ENCODE measurements at regions of chr6 and their contacts with region 1.

Region 1: DNA sequence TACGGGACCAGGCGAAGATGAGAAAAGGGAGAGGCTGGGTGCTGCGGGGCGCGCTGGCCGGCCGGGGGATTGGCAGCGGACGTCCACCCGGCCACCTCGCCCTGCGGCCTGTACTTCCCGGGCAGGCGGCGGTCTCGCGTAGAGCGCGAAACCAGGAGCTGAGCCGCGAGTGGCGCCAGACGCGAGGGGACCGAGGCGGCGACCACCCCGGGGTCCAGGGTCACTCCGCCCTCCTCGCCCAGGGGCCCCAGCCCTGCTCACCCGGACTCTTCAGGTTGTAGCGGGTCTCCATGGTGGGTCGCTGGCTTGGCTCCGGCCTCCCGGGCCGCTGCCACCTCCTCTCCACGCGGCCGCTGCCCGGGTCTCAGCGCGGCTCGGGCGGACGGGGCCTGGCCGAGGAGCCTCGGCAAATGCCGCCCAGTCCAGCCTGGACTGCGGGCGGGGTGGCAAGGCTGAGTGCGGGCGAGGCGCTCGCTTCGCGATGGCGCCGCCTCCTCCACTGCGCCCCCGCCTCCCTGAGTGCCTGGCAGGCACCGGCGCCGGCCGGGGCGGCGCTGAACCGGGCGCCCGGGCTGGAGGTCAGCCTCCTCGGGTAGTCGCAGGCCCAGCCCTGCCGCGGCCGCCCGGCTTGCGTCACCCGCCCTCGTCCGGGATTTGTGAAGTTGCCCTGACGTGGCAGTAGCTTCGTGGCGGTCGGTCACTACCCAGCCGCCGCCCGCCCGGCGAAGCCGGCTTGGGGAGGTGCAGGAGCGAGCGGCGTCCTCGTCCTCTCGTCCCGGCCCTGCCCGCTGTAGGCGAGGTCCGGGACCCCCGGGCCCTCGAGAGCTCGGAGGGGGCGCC is at the start of gene UBE2J1:
- DNase-seq: peak; percentile 80 to 93
- H3K4me3 ChIP-seq: peak within 1 kb of the TSS; percentile 81
- H3K27ac ChIP-seq: peak within 1 kb of the TSS; percentile 88
- H3K4me1 ChIP-seq: peaks cover 28% of the 10 kb centered on the region
- H3K27me3 ChIP-seq: no peaks in the 10 kb centered on the region
- CTCF ChIP-seq: no peak
- total RNA-seq, gene UBE2J1: 19.8 and 29.0 TPM in 2 replicates

Region 2: DNA sequence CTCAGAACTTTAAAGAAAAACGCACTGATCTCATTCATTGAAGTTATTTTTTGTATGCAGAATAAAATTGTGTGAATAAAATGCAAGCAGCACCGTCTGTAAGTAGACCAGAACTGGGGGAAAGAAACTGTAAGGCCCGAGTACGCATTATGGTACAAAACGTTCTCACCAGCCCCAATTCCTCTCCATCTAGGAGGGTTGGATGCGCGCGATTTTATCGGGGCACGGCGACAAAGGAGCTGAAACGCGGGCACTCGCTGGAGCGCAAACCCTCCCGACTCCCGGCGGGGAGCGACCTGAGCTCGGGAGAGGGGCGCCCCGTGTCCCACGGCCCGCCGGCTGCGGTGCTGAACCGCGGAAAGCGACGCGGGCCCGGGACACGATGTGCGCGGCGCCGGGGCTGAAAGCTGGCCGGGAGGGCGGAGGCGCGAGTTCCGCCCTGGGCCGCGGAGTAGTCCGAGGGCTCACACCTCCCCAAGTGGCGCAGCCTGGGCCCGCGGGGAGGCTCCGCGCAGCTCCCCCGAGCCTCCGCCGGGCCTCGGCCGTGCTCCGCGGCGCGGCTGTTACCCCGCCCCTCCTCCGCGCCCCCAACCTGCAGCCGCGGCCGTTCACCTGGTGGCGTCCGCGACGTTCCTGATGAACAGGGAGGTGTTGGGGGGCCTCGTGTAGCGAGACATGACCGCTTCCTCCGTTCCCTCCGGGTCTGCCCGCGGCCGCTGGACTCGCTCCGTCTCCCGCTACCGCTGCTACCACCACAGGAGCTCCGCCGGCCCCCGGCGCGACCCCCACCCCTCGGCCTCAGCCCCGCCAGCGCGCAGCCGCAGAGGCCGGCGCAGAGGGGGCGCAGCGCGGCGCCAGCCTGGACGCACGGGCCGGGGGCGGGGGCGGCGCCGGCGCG is 235.0 kb before region 1 on chr6 and contains the start of gene SRSF12:
- CTCF ChIA-PET with region 1: no interaction called
- POLR2A ChIA-PET with region 1: interaction called, 10 read pairs
- intact Hi-C with region 1: no loop called
- DNase-seq: peak in 1 of 2 experiments; percentile 11
- H3K4me3 ChIP-seq: peak within 1 kb of the TSS; percentile 56; the same call in 1 of the 2 replicates
- H3K27ac ChIP-seq: no peak within 1 kb of the TSS
- H3K4me1 ChIP-seq: no peaks in the 10 kb centered on the region
- H3K27me3 ChIP-seq: 0 out of 2 replicates have a peak, but pooled peaks cover 4% of the 10 kb centered on the region
- CTCF ChIP-seq: no peak
- total RNA-seq, gene SRSF12: not detected in 2 replicates

Region 3: DNA sequence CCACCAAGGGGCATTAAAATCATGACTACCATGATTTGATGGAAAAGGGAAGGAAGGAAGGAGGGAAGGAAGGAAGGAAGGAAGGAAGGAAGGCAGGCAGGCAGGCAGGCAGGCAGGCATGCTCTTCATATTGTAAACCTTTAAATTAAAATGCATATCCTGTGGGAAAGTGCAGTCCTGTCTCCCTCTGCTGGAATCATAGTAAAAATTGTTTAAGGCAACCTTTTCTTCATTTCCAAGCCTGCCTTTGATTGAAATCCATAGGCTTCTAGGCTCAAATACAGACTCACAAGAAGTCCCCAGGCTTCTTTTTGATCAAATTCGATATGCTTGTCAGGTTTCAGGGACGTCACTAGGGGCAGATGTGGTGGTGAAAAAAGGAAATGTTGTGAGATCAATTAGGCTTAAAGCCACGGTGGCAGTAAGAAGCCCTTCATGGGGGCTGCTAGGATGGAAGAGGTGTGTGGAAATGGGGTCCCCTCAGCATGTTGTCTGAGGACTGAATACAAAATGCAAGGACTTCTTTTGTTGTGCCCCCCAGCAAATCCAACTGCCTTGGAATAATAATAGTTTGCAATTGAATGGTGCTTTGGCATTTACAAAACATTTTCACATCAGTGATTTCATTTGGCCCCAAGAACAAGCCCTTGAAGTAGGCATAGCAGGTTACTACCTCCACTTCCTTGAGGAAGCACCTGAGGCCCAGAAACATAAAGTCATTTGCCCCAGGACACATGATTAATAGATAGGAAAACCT is 109.7 kb before region 1 on chr6:
- CTCF ChIA-PET with region 1: no interaction called
- POLR2A ChIA-PET with region 1: interaction called, 30 read pairs
- intact Hi-C with region 1: no loop called
- DNase-seq: peak in 1 of 2 experiments; percentile 43
- H3K4me3 ChIP-seq: no peak overlapping the region
- H3K27ac ChIP-seq: peak overlapping the region; percentile 33
- H3K4me1 ChIP-seq: peaks cover 12% of the 10 kb centered on the region; the same call in 1 of the 2 replicates
- H3K27me3 ChIP-seq: no peaks in the 10 kb centered on the region
- CTCF ChIP-seq: peak; percentile 58

Region 4: GRCh38 chr6:89414215-89414614 is 61.7 kb after region 1 on chr6:
- CTCF ChIA-PET with region 1: no interaction called
- POLR2A ChIA-PET with region 1: interaction called, 10 read pairs
- intact Hi-C with region 1: no loop called
- DNase-seq: no peak
- H3K4me3 ChIP-seq: no peak overlapping the region
- H3K27ac ChIP-seq: no peak overlapping the region
- H3K4me1 ChIP-seq: no peaks in the 10 kb centered on the region
- H3K27me3 ChIP-seq: peaks cover 15% of the 10 kb centered on the region
- CTCF ChIP-seq: no peak